HCT116 (cell line): ENCODE measurements at regions of chr2 and their contacts with region 1.

Region 1: GRCh38 chr2:197777823-197778407 is 7.2 kb downstream of the BOLL start:
- DNase-seq: peak; percentile 16
- ATAC-seq: no peak
- H3K4me3 ChIP-seq: no peak overlapping the region
- H3K27ac ChIP-seq: no peak overlapping the region
- H3K4me1 ChIP-seq: no peaks in the 10 kb centered on the region
- H3K27me3 ChIP-seq: no peaks in the 10 kb centered on the region
- CTCF ChIP-seq: peak; percentile 43 to 78 (median 55); a peak in 4 of 6 replicates
- POLR2A ChIP-seq: no peak
- RAD21 ChIP-seq: peak; percentile 81

Region 2: DNA sequence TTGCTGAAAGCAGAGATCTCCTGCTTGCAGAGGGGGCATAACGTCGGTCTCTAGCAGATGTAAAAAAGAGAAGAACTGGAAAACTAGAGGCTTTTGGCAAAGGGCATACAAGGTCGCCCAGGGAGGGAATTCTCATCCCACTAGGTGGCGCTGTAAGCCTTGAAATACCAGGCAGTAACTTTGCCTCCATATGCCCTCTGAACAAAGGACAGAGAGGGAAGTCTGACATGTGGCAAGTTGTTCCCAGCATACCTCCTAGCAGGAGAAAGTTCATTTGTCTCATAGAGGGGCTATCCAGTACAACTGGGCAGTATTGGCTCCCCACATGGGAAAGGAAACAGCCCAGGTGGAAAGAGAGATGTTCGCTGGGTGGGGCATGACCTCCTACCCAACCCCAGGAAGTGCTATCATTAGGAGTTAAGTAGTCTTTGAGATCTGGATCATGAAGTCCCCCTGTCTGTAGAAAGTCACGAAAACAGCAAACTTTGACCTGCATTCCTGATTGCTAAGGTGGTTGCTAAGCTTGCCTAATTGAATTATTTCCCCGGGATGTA is 1646.5 kb before region 1 on chr2:
- CTCF ChIA-PET with region 1: no interaction called
- POLR2A ChIA-PET with region 1: no interaction called
- RAD21 ChIA-PET with region 1: no interaction called
- intact Hi-C with region 1: loop called (anchors 10 kb)
- DNase-seq: peak; percentile 66
- ATAC-seq: peak; percentile 97
- H3K4me3 ChIP-seq: no peak overlapping the region
- H3K27ac ChIP-seq: no peak overlapping the region
- H3K4me1 ChIP-seq: no peaks in the 10 kb centered on the region; a peak in 1 of 4 replicates
- H3K27me3 ChIP-seq: no peaks in the 10 kb centered on the region
- CTCF ChIP-seq: peak; percentile 64 to 85 (median 84)
- POLR2A ChIP-seq: no peak
- RAD21 ChIP-seq: peak; percentile 98

Region 3: GRCh38 chr2:197011799-197012641 is 765.9 kb before region 1 on chr2:
- CTCF ChIA-PET with region 1: interaction called, 5 read pairs
- POLR2A ChIA-PET with region 1: no interaction called
- RAD21 ChIA-PET with region 1: no interaction called
- intact Hi-C with region 1: loop called (anchors 10 kb)
- DNase-seq: peak; percentile 42
- ATAC-seq: peak; percentile 95
- H3K4me3 ChIP-seq: no peak overlapping the region
- H3K27ac ChIP-seq: no peak overlapping the region
- H3K4me1 ChIP-seq: no peaks in the 10 kb centered on the region
- H3K27me3 ChIP-seq: no peaks in the 10 kb centered on the region
- CTCF ChIP-seq: peak; percentile 67 to 93 (median 85); a peak in 5 of 6 replicates
- POLR2A ChIP-seq: no peak
- RAD21 ChIP-seq: peak; percentile 79

Region 4: DNA sequence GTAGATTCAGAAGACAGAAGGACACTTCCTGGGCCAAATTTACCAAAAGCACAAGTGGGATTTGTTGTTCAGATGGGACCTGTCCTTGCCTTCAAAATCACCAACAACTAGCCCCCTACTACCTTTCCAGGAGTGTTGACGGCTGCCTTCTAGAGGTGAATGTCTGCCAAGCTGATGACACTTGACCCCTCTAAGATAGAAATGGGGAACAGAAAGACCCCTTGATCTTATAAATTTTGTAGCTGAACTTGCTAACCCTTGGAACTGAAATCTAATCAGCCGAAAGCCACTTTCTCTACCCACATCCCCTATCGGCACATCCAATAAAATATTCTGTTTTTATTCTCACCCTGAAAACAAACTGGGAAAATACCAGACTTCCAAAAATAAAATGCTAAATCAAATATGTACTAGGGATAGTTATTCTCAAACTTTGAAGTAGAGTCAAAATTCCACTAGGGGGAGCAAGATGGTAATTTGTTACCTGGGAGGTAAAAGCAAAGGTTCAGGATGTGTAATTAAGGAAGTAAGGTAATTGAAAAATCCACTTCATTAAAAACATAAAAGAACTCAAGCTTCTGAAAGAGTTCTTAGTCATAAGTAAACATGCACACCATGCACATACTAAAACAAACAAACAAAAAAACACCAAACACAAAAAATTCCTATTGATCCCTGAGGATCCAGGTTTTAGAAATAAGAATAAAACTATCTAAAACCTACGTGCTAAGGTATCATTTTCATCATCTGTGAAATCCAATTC is 586.6 kb before region 1 on chr2:
- CTCF ChIA-PET with region 1: no interaction called
- POLR2A ChIA-PET with region 1: no interaction called
- RAD21 ChIA-PET with region 1: no interaction called
- intact Hi-C with region 1: loop called (anchors 5 kb)
- DNase-seq: peak; percentile 31
- ATAC-seq: peak; percentile 68
- H3K4me3 ChIP-seq: no peak overlapping the region
- H3K27ac ChIP-seq: no peak overlapping the region
- H3K4me1 ChIP-seq: no peaks in the 10 kb centered on the region
- H3K27me3 ChIP-seq: no peaks in the 10 kb centered on the region
- CTCF ChIP-seq: peak; percentile 61 to 83 (median 78)
- POLR2A ChIP-seq: no peak
- RAD21 ChIP-seq: peak; percentile 86

Region 5: GRCh38 chr2:197416268-197416667 is 361.6 kb before region 1 on chr2:
- CTCF ChIA-PET with region 1: no interaction called
- POLR2A ChIA-PET with region 1: no interaction called
- RAD21 ChIA-PET with region 1: interaction called in 1 of 2 experiments, 3 read pairs
- intact Hi-C with region 1: loop called (anchors 10 kb)
- DNase-seq: no peak
- ATAC-seq: no peak
- H3K4me3 ChIP-seq: no peak overlapping the region
- H3K27ac ChIP-seq: no peak overlapping the region
- H3K4me1 ChIP-seq: no peaks in the 10 kb centered on the region
- H3K27me3 ChIP-seq: no peaks in the 10 kb centered on the region
- CTCF ChIP-seq: no peak
- POLR2A ChIP-seq: no peak
- RAD21 ChIP-seq: no peak